A673 (cell line): ENCODE measurements at regions of chr21 and their contacts with region 1.

Region 1: DNA sequence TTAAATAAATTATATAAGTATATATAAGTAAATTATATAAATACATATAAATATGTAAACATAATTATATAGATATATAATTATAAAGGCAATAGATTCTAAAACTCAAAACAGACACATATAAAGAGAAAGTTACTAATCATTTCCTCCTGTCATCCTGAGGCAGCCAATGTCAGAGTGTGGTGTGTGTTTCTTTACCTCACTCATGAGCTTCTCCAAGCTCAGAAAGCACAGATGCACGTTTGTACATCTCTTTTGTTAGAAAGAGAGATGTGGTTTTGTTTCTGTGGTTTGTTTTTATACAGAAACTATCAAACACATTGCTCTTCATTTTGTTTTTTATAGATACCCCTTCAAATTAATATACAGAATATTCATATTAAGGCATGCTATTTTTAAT is 594.8 kb downstream of the USP25 start:
- DNase-seq: no peak
- H3K4me3 ChIP-seq: no peak overlapping the region
- H3K27ac ChIP-seq: no peak overlapping the region
- H3K4me1 ChIP-seq: no peaks in the 10 kb centered on the region
- H3K27me3 ChIP-seq: no peaks in the 10 kb centered on the region
- CTCF ChIP-seq: no peak

Region 2: GRCh38 chr21:16002874-16003466 is 321.7 kb before region 1 on chr21:
- CTCF ChIA-PET with region 1: interaction called, 3 read pairs
- POLR2A ChIA-PET with region 1: no interaction called
- intact Hi-C with region 1: loop called (anchors 5 kb)
- DNase-seq: peak; percentile 21
- H3K4me3 ChIP-seq: no peak overlapping the region
- H3K27ac ChIP-seq: no peak overlapping the region
- H3K4me1 ChIP-seq: peaks cover 4% of the 10 kb centered on the region
- H3K27me3 ChIP-seq: no peaks in the 10 kb centered on the region
- CTCF ChIP-seq: peak; percentile 57